Activated T-helper 1 cell treated with anti-CD3 and anti-CD28 coated beads, Interleukin-12 subunit alpha, Interleukin-12 subunit beta, Interleukin-2, Interleukin-4 antibody, amounts not matched to agents 30 ng/mL and 10 ng/mL and 1 ng/mL, durations not matched to agents 14 hours and 24 hours and 36 hours (primary cell): ENCODE measurements at regions of chr12 and their contacts with region 1.

Region 1: GRCh38 chr12:4538207-4539160 is at the start of gene RAD51AP1:
- DNase-seq: peak; percentile 93
- H3K4me3 Mint-ChIP-seq: peak within 1 kb of the TSS; percentile 98
- H3K27ac Mint-ChIP-seq: peak within 1 kb of the TSS; percentile 91
- H3K4me1 Mint-ChIP-seq: peaks cover 30% of the 10 kb centered on the region
- H3K27me3 Mint-ChIP-seq: peaks cover 2% of the 10 kb centered on the region
- total RNA-seq, gene RAD51AP1: 34.1 and 39.4 TPM in 2 replicates

Region 2: DNA sequence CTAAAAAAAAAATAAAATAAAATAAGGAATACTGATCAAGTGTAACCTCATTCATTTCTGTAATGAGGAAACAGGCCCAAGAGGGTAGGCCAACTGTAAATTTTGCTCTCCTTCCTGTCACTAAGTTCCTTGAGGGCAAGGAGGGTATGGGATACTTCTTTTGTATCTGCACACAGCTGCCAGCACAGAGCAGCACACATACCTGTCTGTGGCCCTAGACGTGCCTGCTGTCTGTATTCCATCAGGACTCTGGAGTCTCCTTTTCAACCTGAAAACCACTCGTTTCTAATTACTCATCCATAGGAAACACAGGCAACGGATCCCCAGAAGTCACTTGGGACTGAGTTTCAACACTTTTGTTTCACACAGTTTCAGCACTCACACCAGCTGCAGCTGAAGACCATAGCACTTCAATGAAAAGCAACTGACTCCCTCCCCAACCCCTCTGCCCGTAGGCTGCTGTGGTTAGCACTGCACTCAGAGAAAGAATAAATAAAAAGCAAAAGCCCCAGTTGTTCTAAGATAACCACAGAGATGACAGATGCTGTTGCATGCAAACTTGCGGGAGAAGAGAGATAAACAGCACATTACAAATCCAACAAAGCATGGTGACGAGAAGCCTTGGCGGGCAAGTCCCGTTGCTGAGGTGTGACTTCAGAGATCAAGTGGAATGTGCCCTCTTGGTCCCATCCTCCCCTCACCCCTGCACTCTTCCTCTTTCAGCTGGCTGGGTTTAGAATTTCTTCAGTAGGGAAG is 810.4 kb before region 1 on chr12:
- intact Hi-C with region 1: loop called (anchors 10 kb)
- DNase-seq: peak; percentile 69
- H3K4me3 Mint-ChIP-seq: peak overlapping the region; percentile 83
- H3K27ac Mint-ChIP-seq: peak overlapping the region; percentile 95
- H3K4me1 Mint-ChIP-seq: peaks cover 46% of the 10 kb centered on the region
- H3K27me3 Mint-ChIP-seq: no peaks in the 10 kb centered on the region

Region 3: DNA sequence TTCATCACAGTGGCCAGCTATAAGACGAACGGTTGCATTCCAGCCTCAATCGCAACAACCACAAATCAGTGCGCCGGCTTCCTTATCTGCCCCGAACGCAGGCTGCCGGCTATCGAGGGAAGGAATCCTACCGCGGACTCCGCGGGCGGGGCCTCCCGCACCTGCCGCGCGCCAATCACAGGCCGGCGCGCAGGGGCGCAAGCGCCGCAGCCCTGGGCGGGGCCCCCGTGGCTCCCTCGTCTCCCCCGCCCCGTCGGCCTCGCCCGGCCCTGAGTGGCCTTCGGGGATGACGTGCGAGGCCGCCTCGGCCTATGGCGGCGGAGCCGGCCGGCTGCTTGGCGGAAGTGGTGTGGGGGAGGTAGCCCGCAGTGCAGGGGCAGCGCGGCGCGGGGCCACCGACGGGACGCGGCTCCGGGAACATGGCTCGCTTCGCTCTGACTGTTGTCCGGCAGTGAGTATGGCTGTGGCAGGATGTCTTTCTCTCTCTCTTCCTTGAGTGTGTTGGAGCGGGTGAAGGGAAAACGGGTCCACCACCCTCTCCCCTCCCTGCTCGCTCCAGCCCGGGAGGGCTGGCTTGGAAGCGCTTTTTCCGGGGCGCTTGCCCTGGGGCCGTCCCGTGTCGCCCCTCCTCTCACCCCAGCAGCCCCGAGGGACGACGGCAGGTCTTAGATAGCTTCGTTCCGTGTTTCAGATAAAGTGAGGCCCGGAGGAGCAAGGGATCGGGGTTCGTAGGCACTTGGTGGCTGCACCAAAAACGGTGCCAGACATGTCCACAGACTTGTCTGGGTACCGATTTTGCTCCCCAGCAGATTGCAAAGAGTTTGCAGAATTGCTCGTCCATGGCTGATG is 217.4 kb before region 1 on chr12 and contains the start of gene TIGAR:
- intact Hi-C with region 1: loop called (anchors 1 kb)
- DNase-seq: peak; percentile 93
- H3K4me3 Mint-ChIP-seq: peak within 1 kb of the TSS; percentile 93
- H3K27ac Mint-ChIP-seq: peak within 1 kb of the TSS; percentile 93
- H3K4me1 Mint-ChIP-seq: peaks cover 45% of the 10 kb centered on the region
- H3K27me3 Mint-ChIP-seq: no peaks in the 10 kb centered on the region
- total RNA-seq, gene TIGAR: 14.4 TPM in 2 replicates

Region 4: DNA sequence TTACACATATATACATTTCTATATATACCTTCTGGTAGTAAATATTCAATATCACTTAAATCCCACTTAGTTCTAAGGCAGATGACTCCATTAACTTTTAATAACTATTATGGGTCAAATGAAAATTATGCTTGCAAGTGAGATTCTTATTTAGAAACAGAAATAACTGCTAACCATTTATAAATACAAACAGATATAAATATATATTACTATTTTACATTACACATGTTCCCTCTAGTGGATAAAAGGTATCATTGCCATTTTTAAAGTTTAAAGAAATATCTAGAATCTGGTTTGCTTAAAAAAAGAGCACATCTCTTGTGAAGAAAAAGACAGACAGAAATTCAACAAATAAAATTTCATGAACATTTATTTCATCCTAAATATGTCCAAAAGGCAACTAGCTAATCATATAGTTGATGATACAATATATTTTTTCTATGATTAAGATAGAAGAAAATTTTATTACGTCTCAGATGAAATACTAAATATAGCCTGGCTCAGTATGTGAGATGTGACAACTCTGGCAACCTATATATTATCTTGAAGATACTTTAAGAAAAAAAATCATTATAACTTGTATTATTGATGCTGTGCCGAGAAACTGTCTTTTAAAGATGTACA is 11.4 kb before region 1 on chr12:
- intact Hi-C with region 1: loop called (anchors 1 kb)
- DNase-seq: no peak
- H3K4me3 Mint-ChIP-seq: no peak overlapping the region
- H3K27ac Mint-ChIP-seq: no peak overlapping the region
- H3K4me1 Mint-ChIP-seq: no peaks in the 10 kb centered on the region
- H3K27me3 Mint-ChIP-seq: no peaks in the 10 kb centered on the region

Region 5: GRCh38 chr12:4648501-4649357 is 110.2 kb after region 1 on chr12 and contains the starts of genes AKAP3 and NDUFA9:
- intact Hi-C with region 1: loop called (anchors 1 kb)
- DNase-seq: peak; percentile 77
- H3K4me3 Mint-ChIP-seq: peak within 1 kb of the TSS; percentile 98
- H3K27ac Mint-ChIP-seq: peak within 1 kb of the TSS; percentile 91
- H3K4me1 Mint-ChIP-seq: peaks cover 44% of the 10 kb centered on the region
- H3K27me3 Mint-ChIP-seq: peaks cover 8% of the 10 kb centered on the region
- total RNA-seq, gene AKAP3: 0.65 and 1.1 TPM in 2 replicates
- total RNA-seq, gene NDUFA9: 118 and 123 TPM in 2 replicates